Activated B cell treated with CpG ODN at 0.5 μM for 24 hours (primary cell): ENCODE measurements at regions of chr4 and their contacts with region 1.

Region 1: DNA sequence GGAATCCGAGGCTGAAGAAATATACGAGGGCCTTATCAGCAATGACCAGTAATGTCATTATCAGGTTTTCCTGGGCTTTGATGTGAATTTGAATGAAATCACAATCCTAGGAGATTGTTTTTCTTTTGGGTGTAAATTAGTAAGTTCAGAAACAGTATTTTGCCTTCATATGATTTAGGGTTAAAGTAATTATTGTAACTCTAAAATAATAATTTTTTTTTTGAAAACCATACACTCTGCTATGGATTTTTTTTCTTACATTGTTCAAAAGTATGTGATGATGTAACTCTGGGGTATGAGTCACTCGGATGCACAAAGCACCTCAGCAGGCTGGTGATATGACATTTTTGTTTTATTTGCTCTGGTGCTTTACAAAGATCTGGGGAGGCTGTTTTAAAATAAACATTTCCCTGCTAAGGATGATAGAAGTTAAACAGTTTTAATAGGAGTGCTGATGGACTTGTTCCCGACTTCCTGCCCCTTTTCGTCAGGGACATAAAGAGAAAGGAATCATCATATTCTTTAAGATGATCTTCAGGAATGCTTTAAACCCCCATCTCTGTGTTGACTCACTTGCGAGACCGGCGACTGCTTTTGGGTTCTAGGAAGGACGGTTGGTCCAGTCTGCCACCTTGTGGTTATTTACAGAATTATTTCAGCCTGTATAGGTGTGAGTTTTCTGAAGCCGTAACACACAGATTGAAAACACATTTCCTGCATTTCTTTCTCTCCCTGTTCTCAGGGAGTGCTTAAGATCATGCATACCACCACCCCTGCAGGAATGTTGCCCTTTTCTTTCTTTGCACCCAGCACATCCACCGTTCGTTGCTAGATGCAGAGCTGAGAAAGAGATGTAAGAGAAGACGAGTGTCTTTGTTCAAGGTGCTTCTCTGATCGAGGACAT is 72.5 kb downstream of the RAPGEF2 start:
- DNase-seq: peak; percentile 20
- ATAC-seq: peak; percentile 84
- H3K4me3 Mint-ChIP-seq: no peak overlapping the region
- H3K27ac Mint-ChIP-seq: no peak overlapping the region
- H3K4me1 Mint-ChIP-seq: peaks cover 60% of the 10 kb centered on the region
- H3K27me3 Mint-ChIP-seq: peaks cover 10% of the 10 kb centered on the region
- CTCF ChIP-seq: peak; percentile 72

Region 2: GRCh38 chr4:158253350-158253980 is 921.9 kb before region 1 on chr4:
- CTCF ChIA-PET with region 1: no interaction called
- POLR2A ChIA-PET with region 1: no interaction called
- intact Hi-C with region 1: loop called (anchors 1 kb)
- DNase-seq: no peak
- ATAC-seq: peak; percentile 42
- H3K4me3 Mint-ChIP-seq: no peak overlapping the region
- H3K27ac Mint-ChIP-seq: no peak overlapping the region
- H3K4me1 Mint-ChIP-seq: peaks cover 5% of the 10 kb centered on the region
- H3K27me3 Mint-ChIP-seq: peaks cover 12% of the 10 kb centered on the region
- CTCF ChIP-seq: no peak

Region 3: DNA sequence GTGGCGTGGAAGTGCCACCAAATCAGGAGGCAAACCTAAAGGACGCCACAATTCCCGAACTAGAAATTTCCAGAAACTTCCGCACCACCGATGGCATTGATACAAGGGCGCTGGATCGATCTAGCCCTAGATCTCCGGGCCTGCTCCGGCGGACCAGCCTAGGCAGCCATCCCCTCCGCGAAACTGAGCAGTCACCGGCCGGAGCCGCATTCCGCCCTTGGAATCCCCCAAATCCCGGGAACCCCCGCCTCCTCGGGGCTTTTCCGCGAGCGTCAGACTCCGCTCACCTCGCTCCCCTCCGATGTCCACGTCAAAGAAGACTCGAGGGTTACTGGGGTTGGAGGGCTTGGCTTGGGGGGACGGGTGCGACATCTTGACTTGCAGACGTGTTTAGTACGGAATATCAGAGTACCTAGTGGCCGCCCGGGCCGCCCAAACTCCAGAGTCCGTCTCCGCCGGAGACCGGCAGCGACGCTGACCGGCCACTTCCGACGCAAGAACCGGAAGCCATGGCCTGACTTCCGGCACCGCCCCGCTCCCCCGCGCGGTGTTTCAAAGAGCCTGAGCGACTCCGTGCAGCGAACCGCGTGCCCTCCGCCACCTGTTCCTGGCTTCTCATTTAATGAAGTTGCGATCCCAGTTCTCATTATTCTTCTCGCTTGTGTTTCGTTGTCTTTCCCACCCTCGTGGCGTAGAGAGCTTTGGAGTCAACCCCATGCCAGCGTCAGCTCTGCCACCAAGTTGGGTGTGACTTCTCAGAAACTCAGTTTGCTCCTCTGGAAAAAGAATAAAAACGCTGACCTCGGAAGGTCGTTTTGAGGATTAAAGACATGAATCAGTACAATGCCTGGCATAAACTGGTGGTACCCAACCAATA is 452.2 kb before region 1 on chr4 and contains the start of gene PPID:
- CTCF ChIA-PET with region 1: no interaction called
- POLR2A ChIA-PET with region 1: no interaction called
- intact Hi-C with region 1: loop called (anchors 2 kb)
- DNase-seq: peak; percentile 79
- ATAC-seq: peak; percentile 90
- H3K4me3 Mint-ChIP-seq: peak within 1 kb of the TSS; percentile 97
- H3K27ac Mint-ChIP-seq: peak within 1 kb of the TSS; percentile 93
- H3K4me1 Mint-ChIP-seq: peaks cover 21% of the 10 kb centered on the region
- H3K27me3 Mint-ChIP-seq: peaks cover 4% of the 10 kb centered on the region
- CTCF ChIP-seq: no peak
- total RNA-seq, gene PPID: 28.5 and 29.8 TPM in 2 replicates

Region 4: GRCh38 chr4:158850800-158851644 is 324.3 kb before region 1 on chr4:
- CTCF ChIA-PET with region 1: interaction called, 30 read pairs
- POLR2A ChIA-PET with region 1: no interaction called
- intact Hi-C with region 1: no loop called
- DNase-seq: no peak
- ATAC-seq: no peak
- H3K4me3 Mint-ChIP-seq: no peak overlapping the region
- H3K27ac Mint-ChIP-seq: no peak overlapping the region
- H3K4me1 Mint-ChIP-seq: no peaks in the 10 kb centered on the region
- H3K27me3 Mint-ChIP-seq: peaks cover 32% of the 10 kb centered on the region
- CTCF ChIP-seq: no peak

Region 5: GRCh38 chr4:159051245-159052071 is 123.9 kb before region 1 on chr4:
- CTCF ChIA-PET with region 1: no interaction called
- POLR2A ChIA-PET with region 1: no interaction called
- intact Hi-C with region 1: loop called (anchors 5 kb)
- DNase-seq: no peak
- ATAC-seq: peak; percentile 51
- H3K4me3 Mint-ChIP-seq: peak overlapping the region; percentile 56
- H3K27ac Mint-ChIP-seq: peak overlapping the region; percentile 63
- H3K4me1 Mint-ChIP-seq: peaks cover 19% of the 10 kb centered on the region
- H3K27me3 Mint-ChIP-seq: peaks cover 40% of the 10 kb centered on the region
- CTCF ChIP-seq: no peak

Region 6: DNA sequence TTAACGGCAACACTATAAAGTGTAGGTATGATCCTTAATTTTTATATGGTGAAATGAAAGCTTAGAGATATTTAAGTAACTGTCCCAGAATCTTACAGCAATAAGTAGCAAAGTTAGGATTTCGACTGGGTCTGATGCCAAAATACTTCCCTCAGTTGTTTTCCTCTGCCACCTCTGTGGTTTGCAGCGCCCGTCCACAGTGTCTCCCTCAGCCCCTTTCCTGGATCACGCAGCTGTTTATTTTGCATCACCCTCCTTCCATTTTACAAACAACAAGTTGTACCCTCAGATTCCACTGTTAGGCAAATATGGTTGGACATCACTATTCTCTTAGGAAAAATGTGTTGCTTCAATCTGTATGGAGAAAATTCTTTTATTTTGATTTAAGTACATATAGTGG is 16.4 kb before region 1 on chr4:
- CTCF ChIA-PET with region 1: no interaction called
- POLR2A ChIA-PET with region 1: no interaction called
- intact Hi-C with region 1: no loop called
- DNase-seq: no peak
- ATAC-seq: no peak
- H3K4me3 Mint-ChIP-seq: no peak overlapping the region
- H3K27ac Mint-ChIP-seq: no peak overlapping the region
- H3K4me1 Mint-ChIP-seq: peaks cover 3% of the 10 kb centered on the region
- H3K27me3 Mint-ChIP-seq: no peaks in the 10 kb centered on the region
- CTCF ChIP-seq: no peak

Region 7: DNA sequence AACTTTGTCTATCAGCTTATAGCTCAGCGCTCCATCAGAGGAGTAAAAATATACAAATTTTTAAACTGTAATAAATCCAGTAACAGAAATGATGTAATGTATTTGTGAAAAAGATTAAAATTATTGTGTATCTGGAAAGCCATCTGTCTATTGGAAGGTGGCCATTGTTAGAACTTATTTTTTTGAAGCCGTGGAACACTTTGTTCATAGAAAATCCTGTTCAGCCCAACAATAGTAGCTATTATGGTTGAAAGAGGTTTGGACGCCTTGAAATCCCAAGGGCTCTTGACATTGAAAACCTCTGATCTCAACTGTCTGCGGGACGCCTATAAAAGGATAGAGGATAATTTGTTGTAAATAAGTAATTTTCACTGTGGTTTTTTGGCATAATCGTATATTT is 25.8 kb after region 1 on chr4:
- CTCF ChIA-PET with region 1: interaction called, 20 read pairs
- POLR2A ChIA-PET with region 1: interaction called, 3 read pairs
- intact Hi-C with region 1: loop called (anchors 1 kb)
- DNase-seq: no peak
- ATAC-seq: no peak
- H3K4me3 Mint-ChIP-seq: no peak overlapping the region
- H3K27ac Mint-ChIP-seq: no peak overlapping the region
- H3K4me1 Mint-ChIP-seq: peaks cover 18% of the 10 kb centered on the region
- H3K27me3 Mint-ChIP-seq: no peaks in the 10 kb centered on the region
- CTCF ChIP-seq: no peak